ENCODE measurements at regions of chr18 and their contacts with region 1.

Region 1: DNA sequence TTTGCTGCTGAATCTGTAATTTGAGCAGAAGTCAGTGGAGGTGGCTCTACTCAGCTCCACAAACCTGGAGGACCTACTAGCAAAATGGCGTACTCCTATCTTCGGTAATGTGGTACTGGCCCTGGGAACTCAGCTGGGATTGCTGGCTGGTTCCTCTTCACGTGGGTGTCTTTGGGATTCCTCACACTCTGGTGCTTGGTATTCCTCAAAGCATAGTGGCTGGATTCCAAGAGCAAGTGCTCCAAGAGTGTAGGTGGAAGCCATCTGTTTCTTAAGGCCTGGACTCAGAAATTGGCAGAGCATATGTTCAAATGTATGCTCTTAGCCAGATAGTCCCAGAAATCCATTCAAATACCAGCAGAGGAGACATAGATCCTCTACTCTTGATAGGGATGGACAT is 281.9 kb upstream of the CDH7 start:
- DNase-seq: no peak
- H3K4me3 ChIP-seq: no peak overlapping the region
- H3K27ac ChIP-seq: no peak overlapping the region
- H3K4me1 ChIP-seq: no peaks in the 10 kb centered on the region
- H3K27me3 ChIP-seq: no peaks in the 10 kb centered on the region
- CTCF ChIP-seq: no peak

Region 2: DNA sequence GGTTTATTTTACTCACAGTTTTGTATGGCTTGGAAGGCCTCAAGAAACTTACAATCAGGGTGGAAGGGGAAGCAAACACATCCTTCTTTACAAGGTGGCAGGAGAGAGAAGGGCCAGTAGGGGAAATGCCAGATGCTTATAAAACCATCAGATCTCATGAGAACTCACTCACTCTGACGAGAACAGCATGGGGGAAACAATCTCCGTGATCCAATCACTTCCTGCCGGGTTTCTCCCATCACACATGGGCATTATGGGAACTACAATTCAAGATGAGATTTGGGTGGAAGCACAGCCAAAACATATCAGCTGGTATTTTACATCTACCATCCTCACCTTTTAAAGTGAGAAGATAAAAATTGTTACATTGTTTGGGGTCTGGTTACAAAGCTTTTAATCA is 146.0 kb before region 1 on chr18:
- intact Hi-C with region 1: no loop called
- DNase-seq: no peak
- H3K4me3 ChIP-seq: no peak overlapping the region
- H3K27ac ChIP-seq: no peak overlapping the region
- H3K4me1 ChIP-seq: no peaks in the 10 kb centered on the region
- H3K27me3 ChIP-seq: no peaks in the 10 kb centered on the region
- CTCF ChIP-seq: no peak

Region 3: DNA sequence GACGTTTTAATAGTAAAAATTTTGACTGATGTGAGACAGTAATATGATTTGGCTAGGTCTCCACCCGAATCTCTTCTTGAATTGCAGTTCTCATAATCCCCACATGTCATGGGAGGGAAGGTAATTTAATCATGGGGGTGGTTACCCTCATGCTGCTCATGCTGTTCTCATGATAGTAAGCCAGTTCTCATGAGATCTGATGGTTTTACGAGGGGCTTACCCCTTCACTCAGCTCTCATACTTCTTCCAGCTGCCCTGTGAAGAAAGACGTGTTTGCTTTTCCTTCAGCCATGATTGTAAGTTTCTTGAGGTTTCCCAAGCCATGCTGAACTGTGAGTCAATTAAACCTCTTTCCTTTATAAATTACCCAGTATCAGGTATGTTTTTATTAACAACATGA is 45.1 kb before region 1 on chr18:
- intact Hi-C with region 1: no loop called
- DNase-seq: no peak
- H3K4me3 ChIP-seq: no peak overlapping the region
- H3K27ac ChIP-seq: no peak overlapping the region
- H3K4me1 ChIP-seq: no peaks in the 10 kb centered on the region
- H3K27me3 ChIP-seq: no peaks in the 10 kb centered on the region
- CTCF ChIP-seq: no peak

Region 4: GRCh38 chr18:65788373-65788772 is 319.5 kb after region 1 on chr18:
- intact Hi-C with region 1: loop called (anchors 5 kb)
- DNase-seq: no peak
- H3K4me3 ChIP-seq: no peak overlapping the region
- H3K27ac ChIP-seq: no peak overlapping the region
- H3K4me1 ChIP-seq: no peaks in the 10 kb centered on the region
- H3K27me3 ChIP-seq: no peaks in the 10 kb centered on the region
- CTCF ChIP-seq: no peak

Region 5: GRCh38 chr18:66119347-66119746 is 650.5 kb after region 1 on chr18:
- intact Hi-C with region 1: no loop called
- DNase-seq: no peak
- H3K4me3 ChIP-seq: no peak overlapping the region
- H3K27ac ChIP-seq: no peak overlapping the region
- H3K4me1 ChIP-seq: no peaks in the 10 kb centered on the region
- H3K27me3 ChIP-seq: no peaks in the 10 kb centered on the region
- CTCF ChIP-seq: no peak

Measured in ascending aorta (tissue), 2 donors.